AG04449 (cell line): ENCODE measurements at regions of chr14 and their contacts with region 1.

Region 1: DNA sequence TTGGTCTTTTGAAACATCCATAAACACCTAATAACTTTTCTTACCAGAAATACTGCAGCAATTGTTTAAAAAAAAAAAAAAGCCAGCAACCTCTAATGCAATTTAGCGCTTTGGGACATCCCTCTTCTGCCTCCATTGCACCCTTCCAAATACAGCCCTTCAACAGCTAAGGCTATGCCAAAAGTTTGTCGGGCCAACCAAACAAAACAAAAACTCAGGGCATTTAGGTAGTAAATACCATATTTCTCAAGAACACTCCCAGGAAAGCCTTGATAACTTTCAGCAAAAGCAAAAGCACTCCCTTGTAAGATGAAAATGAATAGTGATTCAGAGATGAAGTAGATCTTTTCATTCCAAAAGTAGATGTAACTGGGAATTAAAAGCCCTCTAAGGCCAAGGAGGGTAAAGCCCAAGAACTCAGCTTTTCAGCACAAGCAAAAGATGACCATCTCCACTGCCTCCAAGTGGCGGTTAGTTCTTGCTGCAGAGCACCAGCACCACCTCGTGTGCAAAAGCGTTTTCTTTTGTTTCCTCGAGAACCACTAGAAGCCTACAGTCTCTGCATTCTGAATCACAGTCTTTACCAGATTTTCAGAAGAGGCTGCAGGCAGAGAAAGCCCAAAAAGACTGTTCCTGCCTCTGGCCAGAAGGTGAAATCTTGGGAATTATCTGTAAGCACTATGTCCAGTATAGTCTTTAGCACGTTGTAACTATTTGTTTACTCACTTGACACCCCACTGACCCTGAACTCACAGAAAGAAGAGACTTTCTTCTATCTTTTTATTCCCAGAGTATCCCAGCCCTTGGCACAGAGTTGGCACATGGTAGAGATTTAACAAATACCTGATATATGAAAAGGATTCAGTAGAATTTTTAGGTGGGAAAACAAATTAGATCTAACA is 53.1 kb downstream of the SIX6 start:
- DNase-seq: no peak
- H3K4me3 ChIP-seq: no peak overlapping the region
- CTCF ChIP-seq: peak; percentile 72

Region 2: DNA sequence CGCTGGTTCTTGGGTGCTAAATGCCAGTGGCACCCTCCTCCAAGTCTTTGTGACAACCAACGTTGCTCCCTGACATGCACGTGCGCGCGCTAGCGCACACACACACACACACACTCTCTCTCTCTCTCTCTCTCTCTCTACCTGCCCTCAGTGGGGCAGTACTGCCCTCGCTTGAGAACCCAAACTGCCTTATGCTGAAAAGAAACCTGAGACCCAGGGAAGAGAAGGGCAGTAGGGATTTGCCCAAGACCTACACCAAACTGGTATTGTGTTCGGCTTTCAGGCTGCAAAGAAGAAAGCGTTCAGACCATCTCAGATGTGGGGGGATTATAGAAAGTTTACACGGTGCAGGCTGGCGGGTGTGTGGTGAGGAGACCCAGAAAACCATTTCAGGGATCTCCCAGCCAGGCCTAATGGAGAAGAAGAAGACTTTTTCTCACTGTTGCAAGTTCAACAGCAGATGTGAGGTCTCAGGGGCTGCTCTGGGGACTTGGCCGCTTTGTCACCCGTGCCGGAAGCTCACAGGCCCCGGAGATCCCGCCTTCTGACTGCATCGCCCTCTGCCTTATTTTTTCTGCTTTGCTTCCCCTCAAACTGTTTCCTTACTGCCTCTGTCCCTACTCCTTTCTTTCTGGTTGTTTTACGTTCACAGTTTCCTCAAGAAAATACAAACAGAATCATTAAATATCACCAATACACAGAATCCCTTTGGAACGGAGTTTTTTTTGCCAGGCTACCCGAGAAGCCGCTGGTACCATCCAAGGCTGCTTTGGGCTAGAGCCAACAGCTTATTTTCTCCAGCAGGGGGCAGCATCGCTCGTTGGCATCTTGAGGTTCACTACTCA is 230.7 kb before region 1 on chr14:
- CTCF ChIA-PET with region 1: interaction called, 12 read pairs
- POLR2A ChIA-PET with region 1: no interaction called
- DNase-seq: no peak
- H3K4me3 ChIP-seq: peak overlapping the region; percentile 42
- CTCF ChIP-seq: peak; percentile 58